Heart right ventricle (tissue), 16 donors: ENCODE measurements at regions of chr10 and their contacts with region 1.

Region 1: DNA sequence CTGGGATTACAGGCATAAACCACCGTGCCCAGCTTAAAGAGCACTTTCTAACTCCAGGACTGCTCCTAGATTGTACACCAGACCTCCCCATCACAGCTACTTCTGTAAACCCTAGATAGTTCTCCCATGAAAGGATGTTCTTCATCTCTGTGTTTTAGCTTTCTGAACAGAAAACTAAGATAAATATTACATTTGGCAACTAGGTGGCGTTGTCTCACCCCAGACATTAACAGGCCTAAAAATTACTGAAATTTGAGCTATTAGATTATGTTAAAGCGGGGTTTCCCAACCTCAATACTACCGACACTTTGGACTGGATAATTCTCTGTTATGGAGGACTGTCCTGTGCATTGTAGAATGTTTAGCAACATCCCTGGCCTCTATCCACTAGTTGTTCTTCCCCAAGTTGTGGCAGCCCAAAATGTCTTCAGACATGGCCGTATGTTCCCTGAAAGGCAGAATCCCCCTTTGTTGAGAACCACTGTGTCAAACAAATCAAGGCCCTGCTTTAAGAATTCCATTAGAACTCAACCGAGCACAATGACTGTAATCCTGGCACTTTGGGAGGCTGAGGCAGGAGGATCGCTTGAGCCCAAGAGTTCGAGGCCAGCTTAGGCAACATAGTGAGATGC is 19.1 kb downstream of the ATOH7 start:
- DNase-seq: no peak
- ATAC-seq: peak in 1 of 8 donors; percentile 11
- H3K4me3 ChIP-seq: no peak overlapping the region
- H3K27ac ChIP-seq: no peak overlapping the region
- H3K4me1 ChIP-seq: no peaks in the 10 kb centered on the region
- H3K27me3 ChIP-seq: no peaks in the 10 kb centered on the region
- CTCF ChIP-seq: peak in 8 of 9 donors; percentile 33 to 69 (median 58)

Region 2: DNA sequence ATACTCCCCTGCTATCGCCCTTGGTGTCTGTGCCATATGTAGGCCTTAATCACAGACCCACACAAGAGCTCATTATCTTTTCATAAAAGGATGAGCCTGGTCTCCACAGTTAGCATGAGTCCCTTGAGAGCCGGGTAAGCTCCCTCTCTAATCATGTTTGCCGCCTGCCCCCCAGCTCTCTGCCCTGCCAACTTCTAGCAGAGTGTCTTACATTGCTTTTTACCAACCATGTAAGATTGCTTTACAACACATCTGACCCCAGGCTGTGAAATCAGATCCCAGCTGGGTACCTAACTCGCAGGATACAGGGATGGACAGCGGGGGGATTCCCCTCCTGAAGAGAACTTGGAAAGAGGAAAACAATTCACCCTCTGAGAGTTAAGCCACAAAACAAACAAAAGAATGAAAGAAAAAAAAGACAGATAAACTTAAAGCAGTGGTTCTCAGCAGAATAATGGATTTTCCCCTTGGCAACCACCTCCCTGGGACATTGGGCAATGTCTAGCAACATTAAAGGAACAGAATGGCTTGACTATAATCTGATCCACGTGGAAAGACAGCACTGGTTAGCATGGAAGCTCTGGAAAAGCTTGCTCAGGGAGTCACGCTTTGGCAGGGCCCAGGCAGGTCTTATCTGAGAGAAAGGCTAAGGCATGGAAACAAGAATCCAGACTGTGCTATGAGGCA is 58.5 kb after region 1 on chr10:
- intact Hi-C with region 1: no loop called
- DNase-seq: no peak
- ATAC-seq: peak in 5 of 8 donors; percentile 33 to 72 (median 59)
- H3K4me3 ChIP-seq: no peak overlapping the region
- H3K27ac ChIP-seq: no peak overlapping the region
- H3K4me1 ChIP-seq: no peaks in the 10 kb centered on the region
- H3K27me3 ChIP-seq: no peaks in the 10 kb centered on the region
- CTCF ChIP-seq: no peak

Region 3: DNA sequence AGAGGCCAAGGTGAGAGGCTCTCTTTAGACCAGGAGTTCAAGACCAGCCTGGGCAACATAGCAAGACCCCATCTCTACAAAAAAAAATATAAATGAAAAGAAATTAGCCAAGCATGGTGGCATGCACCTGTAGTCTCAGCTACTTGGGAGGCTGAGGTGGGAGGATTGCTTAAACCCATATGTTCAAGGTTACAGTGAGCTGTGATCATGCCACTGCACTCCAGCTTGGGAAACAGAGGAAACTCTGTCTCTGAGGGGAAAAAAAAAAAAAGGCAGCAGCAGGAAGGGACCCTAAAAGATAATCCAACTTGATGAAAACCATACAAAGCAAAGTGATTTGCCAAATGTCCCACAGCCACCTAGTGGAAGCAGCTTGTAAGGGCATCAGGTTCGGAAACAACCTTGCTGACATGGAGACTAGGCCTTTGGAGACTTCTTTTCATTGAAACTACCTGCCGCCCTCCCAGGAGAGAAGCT is 135.5 kb after region 1 on chr10:
- intact Hi-C with region 1: loop called in 1 of 10 experiments (anchors 5 kb)
- DNase-seq: no peak
- ATAC-seq: peak in 2 of 8 donors; percentile 29 to 39
- H3K4me3 ChIP-seq: no peak overlapping the region
- H3K27ac ChIP-seq: no peak overlapping the region
- H3K4me1 ChIP-seq: no peaks in the 10 kb centered on the region
- H3K27me3 ChIP-seq: no peaks in the 10 kb centered on the region
- CTCF ChIP-seq: peak; percentile 27 to 78 (median 61)

Region 4: GRCh38 chr10:68516766-68517165 is 303.9 kb after region 1 on chr10:
- intact Hi-C with region 1: no loop called
- DNase-seq: no peak
- ATAC-seq: no peak
- H3K4me3 ChIP-seq: no peak overlapping the region
- H3K27ac ChIP-seq: no peak overlapping the region
- H3K4me1 ChIP-seq: no peaks in the 10 kb centered on the region
- H3K27me3 ChIP-seq: no peaks in the 10 kb centered on the region
- CTCF ChIP-seq: no peak